Transverse colon (tissue), 4 donors: ENCODE measurements at regions of chr3 and their contacts with region 1.

Region 1: DNA sequence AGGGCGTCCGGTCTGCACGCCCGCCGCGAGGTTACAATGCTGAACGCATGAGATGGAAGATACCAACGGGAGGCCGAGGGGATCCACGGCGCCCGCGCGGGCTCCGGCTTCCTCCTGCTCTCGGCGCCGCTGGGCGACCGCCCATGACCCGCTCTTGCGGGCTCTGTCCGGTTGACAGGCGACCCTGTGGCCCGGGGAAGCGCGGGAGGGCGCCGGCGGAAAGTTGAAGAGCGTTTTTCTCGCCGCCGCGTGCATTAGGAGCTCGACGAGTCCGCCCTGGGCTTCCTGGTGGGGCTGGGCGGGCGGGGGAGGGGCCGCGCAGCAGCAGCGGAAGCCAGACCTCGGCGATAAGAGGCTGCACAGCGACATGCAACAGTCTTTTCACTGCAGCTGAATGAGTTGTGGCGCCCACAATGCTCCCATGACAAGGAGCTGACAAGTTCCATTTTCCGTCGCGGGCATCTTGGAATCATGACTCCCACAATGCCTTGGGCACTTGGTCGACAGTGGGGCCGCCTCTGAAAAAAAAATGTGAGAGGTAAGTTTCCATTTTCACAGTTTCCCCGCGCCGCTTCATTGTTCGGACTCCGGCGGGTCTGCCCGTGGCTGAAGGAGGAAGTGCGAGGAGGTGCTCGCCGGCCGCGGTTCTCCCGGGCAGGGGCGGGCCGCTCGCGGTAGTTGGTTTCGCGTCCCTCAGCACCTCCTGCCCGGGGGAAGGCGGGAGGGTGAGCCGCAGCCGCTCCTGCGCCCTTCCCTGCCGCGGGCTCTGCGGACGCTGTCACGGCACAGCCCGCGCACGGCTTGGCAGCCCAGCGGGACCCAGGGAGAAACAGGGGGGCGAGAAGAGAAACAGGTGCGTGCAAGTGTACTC is at the start of gene MBNL1:
- DNase-seq: peak; percentile 89
- H3K4me3 ChIP-seq: peak within 1 kb of the TSS; percentile 67 to 92 (median 80)
- H3K27ac ChIP-seq: peak within 1 kb of the TSS; percentile 96 to 100 (median 98)
- H3K4me1 ChIP-seq: peaks cover 18 to 68% (median 36%) of the 10 kb centered on the region in 4 donors
- H3K27me3 ChIP-seq: no peaks in the 10 kb centered on the region
- CTCF ChIP-seq: peak in 1 of 5 experiments; percentile 12
- EP300 ChIP-seq: no peak
- POLR2A ChIP-seq: peak; percentile 81
- total RNA-seq, gene MBNL1: 232 to 658 (median 509) TPM

Region 2: DNA sequence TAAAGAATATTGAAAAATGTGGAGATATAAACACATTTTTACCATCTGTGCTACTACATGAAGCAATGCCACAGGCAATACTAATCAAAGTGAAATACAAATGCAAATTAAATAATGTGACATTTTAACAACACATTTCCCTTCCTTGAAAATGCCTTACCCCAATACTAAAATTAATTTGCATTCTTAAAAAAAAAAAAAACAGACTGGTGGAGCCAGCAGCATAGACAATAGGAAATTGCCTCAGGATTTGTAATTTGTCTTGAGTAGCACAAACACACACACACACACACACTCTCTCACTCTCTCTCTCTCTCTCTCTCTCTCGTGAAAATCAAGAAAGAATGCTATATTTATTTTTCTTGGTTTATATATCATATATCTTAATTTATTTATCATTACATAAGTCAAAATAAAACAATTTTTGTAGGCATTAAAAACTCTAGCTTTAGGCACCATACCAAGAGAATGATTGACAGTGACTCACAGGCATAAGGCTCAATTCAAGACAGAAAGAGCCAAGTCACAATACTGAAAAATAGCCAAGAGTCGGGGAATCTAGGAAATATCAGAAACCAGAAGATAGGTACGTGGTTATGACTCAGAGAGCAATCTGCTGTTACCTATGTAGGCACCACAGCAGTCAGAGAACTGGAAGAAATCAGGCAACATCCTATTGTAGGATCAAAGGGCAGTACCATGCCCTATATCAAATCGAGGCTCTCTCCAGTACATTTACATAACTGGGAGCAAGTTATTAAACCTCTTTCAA is 372.4 kb before region 1 on chr3:
- in situ Hi-C with region 1: no loop called
- intact Hi-C with region 1: no loop called
- DNase-seq: no peak
- H3K4me3 ChIP-seq: no peak overlapping the region
- H3K27ac ChIP-seq: no peak overlapping the region
- H3K4me1 ChIP-seq: peaks cover 0 to 13% (median 2%) of the 10 kb centered on the region in 4 donors
- H3K27me3 ChIP-seq: no peaks in the 10 kb centered on the region
- CTCF ChIP-seq: no peak
- EP300 ChIP-seq: no peak
- POLR2A ChIP-seq: no peak

Region 3: GRCh38 chr3:152097770-152098169 is 171.0 kb before region 1 on chr3:
- in situ Hi-C with region 1: no loop called
- intact Hi-C with region 1: loop called (anchors 10 kb)
- DNase-seq: no peak
- H3K4me3 ChIP-seq: no peak overlapping the region
- H3K27ac ChIP-seq: peak overlapping the region in 3 of 4 donors; percentile 60 to 78 (median 65)
- H3K4me1 ChIP-seq: peaks cover 0 to 7% (median 0%) of the 10 kb centered on the region in 4 donors
- H3K27me3 ChIP-seq: no peaks in the 10 kb centered on the region
- CTCF ChIP-seq: no peak
- EP300 ChIP-seq: no peak
- POLR2A ChIP-seq: no peak

Region 4: GRCh38 chr3:152205097-152205593 is 63.6 kb before region 1 on chr3:
- in situ Hi-C with region 1: loop called in 1 of 4 experiments (anchors 10 kb)
- intact Hi-C with region 1: loop called (anchors 10 kb)
- DNase-seq: no peak
- H3K4me3 ChIP-seq: peak overlapping the region in 3 of 4 donors; percentile 1 to 42 (median 2)
- H3K27ac ChIP-seq: peak overlapping the region; percentile 83 to 89 (median 85)
- H3K4me1 ChIP-seq: peaks cover 0 to 66% (median 38%) of the 10 kb centered on the region in 4 donors
- H3K27me3 ChIP-seq: no peaks in the 10 kb centered on the region
- CTCF ChIP-seq: no peak
- EP300 ChIP-seq: no peak
- POLR2A ChIP-seq: peak; percentile 43

Region 5: GRCh38 chr3:152574461-152575079 is 305.8 kb after region 1 on chr3:
- in situ Hi-C with region 1: no loop called
- intact Hi-C with region 1: no loop called
- DNase-seq: peak; percentile 29
- H3K4me3 ChIP-seq: no peak overlapping the region
- H3K27ac ChIP-seq: no peak overlapping the region
- H3K4me1 ChIP-seq: no peaks in the 10 kb centered on the region
- H3K27me3 ChIP-seq: no peaks in the 10 kb centered on the region
- CTCF ChIP-seq: peak; percentile 33 to 52 (median 35)
- EP300 ChIP-seq: no peak
- POLR2A ChIP-seq: no peak